Lower leg skin (tissue), 4 donors: ENCODE measurements at regions of chr12 and their contacts with region 1.

Region 1: GRCh38 chr12:86513226-86513625 is 257.0 kb upstream of the MGAT4C start:
- DNase-seq: no peak
- H3K4me3 ChIP-seq: no peak overlapping the region
- CTCF ChIP-seq: no peak
- POLR2A ChIP-seq: no peak

Region 2: DNA sequence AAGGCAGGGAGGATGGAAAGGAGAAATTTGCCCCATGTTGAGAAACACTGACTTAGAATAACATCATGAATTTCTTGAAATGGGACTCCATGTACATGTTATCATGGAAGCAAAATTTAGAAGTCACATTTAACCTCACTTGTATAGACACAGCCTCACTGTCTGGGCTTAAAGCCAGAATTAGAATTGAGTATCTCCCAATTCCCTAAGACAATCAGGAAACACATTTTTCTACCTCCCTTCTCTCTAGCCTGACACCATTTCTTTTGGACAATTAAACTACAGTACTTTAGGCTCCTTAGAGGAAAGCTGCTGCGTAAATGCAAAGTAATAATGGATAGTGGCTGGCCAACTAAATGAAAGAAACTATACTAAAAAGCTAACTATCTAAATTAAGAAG is 720.4 kb after region 1 on chr12:
- intact Hi-C with region 1: loop called (anchors 5 kb)
- DNase-seq: no peak
- H3K4me3 ChIP-seq: no peak overlapping the region
- CTCF ChIP-seq: no peak
- POLR2A ChIP-seq: no peak

Region 3: DNA sequence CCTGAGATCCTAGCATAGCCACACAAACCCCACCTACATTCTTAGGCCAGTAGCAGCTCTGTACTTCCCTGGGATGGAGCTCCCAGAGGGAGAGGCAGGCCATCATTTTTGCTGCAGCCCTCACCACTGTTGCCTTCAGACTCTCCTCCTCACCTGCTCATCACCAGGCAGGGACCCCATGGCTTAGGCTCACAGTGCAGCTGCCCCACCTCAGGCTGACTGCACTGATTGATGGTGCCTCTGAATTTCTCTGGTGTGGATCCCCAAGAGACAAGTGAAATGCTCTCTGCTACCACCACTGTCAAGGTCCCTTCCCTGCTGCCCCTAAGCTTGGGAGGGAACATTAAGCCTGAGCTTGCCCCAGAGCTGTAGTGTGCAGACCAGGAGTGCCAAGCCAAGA is 1705.1 kb after region 1 on chr12:
- intact Hi-C with region 1: no loop called
- DNase-seq: no peak
- H3K4me3 ChIP-seq: no peak overlapping the region
- CTCF ChIP-seq: no peak
- POLR2A ChIP-seq: no peak